GM13976 (cell line): ENCODE measurements at regions of chr17 and their contacts with region 1.

Region 1: GRCh38 chr17:17641621-17642409 is 39.4 kb upstream of the RAI1 start:
- DNase-seq: peak; percentile 83
- CTCF ChIP-seq: peak; percentile 89

Region 2: GRCh38 chr17:17356149-17356930 is 285.5 kb before region 1 on chr17:
- in situ Hi-C with region 1: loop called (anchors 5 kb)
- DNase-seq: peak; percentile 88
- CTCF ChIP-seq: peak; percentile 97

Region 3: DNA sequence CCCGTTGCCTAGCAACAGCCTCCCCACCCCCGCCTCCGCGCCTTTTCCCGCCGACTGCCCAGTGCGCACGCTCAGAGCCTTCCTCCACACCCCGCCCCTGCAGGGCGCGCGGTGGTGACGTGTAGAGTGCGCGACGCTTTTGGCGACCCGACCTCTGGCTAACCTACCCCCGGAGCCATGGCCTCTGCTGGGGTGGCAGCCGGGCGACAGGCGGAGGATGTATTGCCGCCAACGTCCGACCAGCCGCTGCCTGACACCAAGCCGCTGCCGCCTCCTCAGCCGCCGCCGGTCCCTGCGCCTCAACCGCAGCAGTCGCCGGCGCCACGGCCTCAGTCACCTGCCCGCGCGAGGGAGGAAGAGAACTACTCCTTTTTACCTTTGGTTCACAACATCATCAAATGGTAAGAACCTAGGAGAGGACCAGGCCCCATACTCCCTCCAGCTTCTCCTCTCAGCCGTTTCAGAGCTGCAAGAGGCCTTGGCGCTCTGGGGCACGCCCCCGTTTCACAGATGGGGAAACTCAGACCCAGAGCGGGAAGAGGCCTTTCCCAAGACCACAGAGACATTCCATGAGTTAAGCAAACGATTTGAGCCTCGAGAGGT is 164.8 kb before region 1 on chr17 and contains the start of gene MED9:
- in situ Hi-C with region 1: no loop called
- DNase-seq: peak; percentile 99
- CTCF ChIP-seq: no peak

Region 4: GRCh38 chr17:17500997-17501605 is 140.7 kb before region 1 on chr17:
- in situ Hi-C with region 1: loop called (anchors 10 kb)
- DNase-seq: no peak
- CTCF ChIP-seq: no peak

Region 5: GRCh38 chr17:17515934-17516930 is 125.6 kb before region 1 on chr17:
- in situ Hi-C with region 1: no loop called
- DNase-seq: no peak
- CTCF ChIP-seq: no peak